IMR-90 (cell line): ENCODE measurements at regions of chr6 and their contacts with region 1.

Region 1: DNA sequence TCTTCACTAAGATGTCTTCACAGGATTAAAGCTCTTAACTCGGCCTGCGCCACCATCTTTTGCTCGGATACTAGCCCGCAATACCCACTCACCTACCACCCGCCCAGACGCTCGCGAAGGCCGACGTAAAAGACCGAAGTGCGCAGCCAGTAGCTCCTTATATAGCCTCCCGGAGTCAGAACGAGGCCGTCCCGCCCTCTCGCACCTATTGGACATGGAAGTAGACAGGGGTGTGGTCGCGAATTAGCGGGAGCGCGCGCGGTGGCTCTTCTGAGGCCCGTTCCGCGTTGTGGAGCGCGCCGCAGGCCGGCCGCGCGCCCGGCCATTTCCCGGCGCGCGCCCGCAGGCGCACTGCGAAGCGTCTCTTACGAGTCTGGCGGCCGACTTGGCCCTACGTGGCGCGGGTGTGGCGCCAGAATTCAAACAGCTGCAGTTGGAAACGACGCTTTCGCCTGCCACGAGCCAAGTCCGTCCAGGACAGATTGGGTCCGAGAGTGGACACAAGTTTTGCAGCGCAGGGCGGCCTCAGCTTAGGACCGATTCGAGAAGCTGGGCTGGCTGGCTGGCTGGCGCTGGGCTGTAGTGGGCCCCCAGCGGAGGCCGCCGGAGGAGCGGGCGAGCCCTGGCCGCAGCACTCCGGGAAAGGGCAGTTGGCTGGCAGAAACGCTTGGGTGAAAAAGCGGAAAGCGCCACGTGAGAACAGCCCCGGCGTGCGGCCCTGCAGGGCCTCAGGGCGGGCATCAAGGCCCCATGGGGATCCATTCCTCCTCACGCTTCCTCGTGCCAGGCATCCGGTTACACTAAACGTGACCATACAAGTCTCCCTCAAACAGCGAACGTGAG is 36.1 kb upstream of the SYNCRIP start:
- DNase-seq: peak; percentile 99
- ATAC-seq: peak; percentile 88
- H3K4me3 ChIP-seq: peak overlapping the region; percentile 75
- H3K27ac ChIP-seq: peak overlapping the region; percentile 85
- H3K4me1 ChIP-seq: peaks cover 3% of the 10 kb centered on the region; the same call in 1 of the 2 replicates
- H3K27me3 ChIP-seq: no peaks in the 10 kb centered on the region
- CTCF ChIP-seq: no peak
- POLR2A ChIP-seq: peak; percentile 100
- RAD21 ChIP-seq: peak; percentile 7; the same call in 1 of the 2 replicates

Region 2: GRCh38 chr6:85449818-85450759 is 228.7 kb before region 1 on chr6 and contains the start of gene NT5E:
- CTCF ChIA-PET with region 1: no interaction called
- POLR2A ChIA-PET with region 1: no interaction called
- dilution Hi-C with region 1: no loop called
- in situ Hi-C with region 1: loop called (anchors 10 kb)
- intact Hi-C with region 1: loop called (anchors 10 kb)
- DNase-seq: peak; percentile 69
- ATAC-seq: peak; percentile 87
- H3K4me3 ChIP-seq: peak within 1 kb of the TSS; percentile 97
- H3K27ac ChIP-seq: peak within 1 kb of the TSS; percentile 92
- H3K4me1 ChIP-seq: peaks cover 26% of the 10 kb centered on the region
- H3K27me3 ChIP-seq: no peaks in the 10 kb centered on the region
- CTCF ChIP-seq: peak; percentile 9; the same call in 1 of the 2 replicates
- POLR2A ChIP-seq: peak; percentile 89
- RAD21 ChIP-seq: no peak
- total RNA-seq, gene NT5E: 280 and 281 TPM in 2 replicates

Region 3: GRCh38 chr6:85620308-85620707 is 58.5 kb before region 1 on chr6:
- CTCF ChIA-PET with region 1: no interaction called
- POLR2A ChIA-PET with region 1: no interaction called
- dilution Hi-C with region 1: no loop called
- in situ Hi-C with region 1: loop called (anchors 10 kb)
- intact Hi-C with region 1: loop called (anchors 10 kb)
- DNase-seq: peak; percentile 33
- ATAC-seq: peak; percentile 73
- H3K4me3 ChIP-seq: no peak overlapping the region
- H3K27ac ChIP-seq: no peak overlapping the region
- H3K4me1 ChIP-seq: peaks cover 6% of the 10 kb centered on the region
- H3K27me3 ChIP-seq: no peaks in the 10 kb centered on the region
- CTCF ChIP-seq: no peak
- POLR2A ChIP-seq: no peak
- RAD21 ChIP-seq: no peak

Region 4: DNA sequence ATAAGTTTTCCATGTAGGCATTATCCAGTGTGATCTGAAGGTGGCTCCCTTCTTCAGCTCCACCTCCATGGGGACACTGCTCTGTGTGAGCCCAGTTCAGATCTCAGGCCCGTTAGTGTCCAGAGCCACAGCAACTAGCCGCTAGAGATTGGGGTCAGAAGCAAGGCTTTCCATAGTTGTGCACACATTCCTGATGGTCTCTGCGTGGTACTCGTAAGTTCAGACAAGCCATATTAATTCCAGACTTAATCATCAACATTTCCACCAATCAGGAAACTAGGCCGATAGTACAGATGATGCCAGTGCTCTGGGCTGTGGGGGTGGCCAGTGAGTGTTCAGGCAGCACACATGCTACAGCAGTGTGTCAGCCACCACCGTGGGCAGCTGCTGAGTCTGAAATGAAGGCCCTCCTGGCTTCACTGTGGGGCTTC is 18.6 kb before region 1 on chr6:
- CTCF ChIA-PET with region 1: no interaction called
- POLR2A ChIA-PET with region 1: interaction called, 11 read pairs
- dilution Hi-C with region 1: no loop called
- in situ Hi-C with region 1: no loop called
- intact Hi-C with region 1: loop called (anchors 2 kb)
- DNase-seq: peak; percentile 98
- ATAC-seq: peak; percentile 100
- H3K4me3 ChIP-seq: peak overlapping the region; percentile 2; the same call in 1 of the 2 replicates
- H3K27ac ChIP-seq: peak overlapping the region; percentile 68
- H3K4me1 ChIP-seq: peaks cover 2% of the 10 kb centered on the region; the same call in 1 of the 2 replicates
- H3K27me3 ChIP-seq: no peaks in the 10 kb centered on the region
- CTCF ChIP-seq: peak; percentile 26; the same call in 1 of the 2 replicates
- POLR2A ChIP-seq: peak; percentile 71
- RAD21 ChIP-seq: peak; percentile 6; the same call in 1 of the 2 replicates

Region 5: GRCh38 chr6:85865420-85866369 is 186.9 kb after region 1 on chr6:
- CTCF ChIA-PET with region 1: no interaction called
- POLR2A ChIA-PET with region 1: no interaction called
- dilution Hi-C with region 1: no loop called
- in situ Hi-C with region 1: no loop called
- intact Hi-C with region 1: loop called (anchors 5 kb)
- DNase-seq: peak; percentile 71
- ATAC-seq: peak; percentile 76
- H3K4me3 ChIP-seq: peak overlapping the region; percentile 58
- H3K27ac ChIP-seq: peak overlapping the region; percentile 91
- H3K4me1 ChIP-seq: peaks cover 7% of the 10 kb centered on the region; the same call in 1 of the 2 replicates
- H3K27me3 ChIP-seq: no peaks in the 10 kb centered on the region
- CTCF ChIP-seq: no peak
- POLR2A ChIP-seq: no peak
- RAD21 ChIP-seq: no peak

Region 6: GRCh38 chr6:86010915-86011786 is 332.3 kb after region 1 on chr6:
- CTCF ChIA-PET with region 1: no interaction called
- POLR2A ChIA-PET with region 1: no interaction called
- dilution Hi-C with region 1: no loop called
- in situ Hi-C with region 1: no loop called
- intact Hi-C with region 1: no loop called
- DNase-seq: no peak
- ATAC-seq: no peak
- H3K4me3 ChIP-seq: no peak overlapping the region
- H3K27ac ChIP-seq: no peak overlapping the region
- H3K4me1 ChIP-seq: no peaks in the 10 kb centered on the region
- H3K27me3 ChIP-seq: no peaks in the 10 kb centered on the region
- CTCF ChIP-seq: no peak
- POLR2A ChIP-seq: no peak
- RAD21 ChIP-seq: no peak

Region 7: GRCh38 chr6:87012035-87012434 is 1333.2 kb after region 1 on chr6:
- CTCF ChIA-PET with region 1: no interaction called
- POLR2A ChIA-PET with region 1: no interaction called
- dilution Hi-C with region 1: no loop called
- in situ Hi-C with region 1: no loop called
- intact Hi-C with region 1: no loop called
- DNase-seq: no peak
- ATAC-seq: no peak
- H3K4me3 ChIP-seq: no peak overlapping the region
- H3K27ac ChIP-seq: no peak overlapping the region
- H3K4me1 ChIP-seq: no peaks in the 10 kb centered on the region
- H3K27me3 ChIP-seq: no peaks in the 10 kb centered on the region
- CTCF ChIP-seq: no peak
- POLR2A ChIP-seq: no peak
- RAD21 ChIP-seq: no peak